ENCODE measurements at regions of chr15 and their contacts with region 1.

Region 1: GRCh38 chr15:62711691-62712454 is 330.7 kb upstream of the TPM1 start:
- DNase-seq: peak; percentile 57
- H3K4me3 Mint-ChIP-seq: no peak overlapping the region
- H3K27ac Mint-ChIP-seq: peak overlapping the region; percentile 59
- H3K4me1 Mint-ChIP-seq: peaks cover 14% of the 10 kb centered on the region
- H3K27me3 Mint-ChIP-seq: no peaks in the 10 kb centered on the region

Region 2: DNA sequence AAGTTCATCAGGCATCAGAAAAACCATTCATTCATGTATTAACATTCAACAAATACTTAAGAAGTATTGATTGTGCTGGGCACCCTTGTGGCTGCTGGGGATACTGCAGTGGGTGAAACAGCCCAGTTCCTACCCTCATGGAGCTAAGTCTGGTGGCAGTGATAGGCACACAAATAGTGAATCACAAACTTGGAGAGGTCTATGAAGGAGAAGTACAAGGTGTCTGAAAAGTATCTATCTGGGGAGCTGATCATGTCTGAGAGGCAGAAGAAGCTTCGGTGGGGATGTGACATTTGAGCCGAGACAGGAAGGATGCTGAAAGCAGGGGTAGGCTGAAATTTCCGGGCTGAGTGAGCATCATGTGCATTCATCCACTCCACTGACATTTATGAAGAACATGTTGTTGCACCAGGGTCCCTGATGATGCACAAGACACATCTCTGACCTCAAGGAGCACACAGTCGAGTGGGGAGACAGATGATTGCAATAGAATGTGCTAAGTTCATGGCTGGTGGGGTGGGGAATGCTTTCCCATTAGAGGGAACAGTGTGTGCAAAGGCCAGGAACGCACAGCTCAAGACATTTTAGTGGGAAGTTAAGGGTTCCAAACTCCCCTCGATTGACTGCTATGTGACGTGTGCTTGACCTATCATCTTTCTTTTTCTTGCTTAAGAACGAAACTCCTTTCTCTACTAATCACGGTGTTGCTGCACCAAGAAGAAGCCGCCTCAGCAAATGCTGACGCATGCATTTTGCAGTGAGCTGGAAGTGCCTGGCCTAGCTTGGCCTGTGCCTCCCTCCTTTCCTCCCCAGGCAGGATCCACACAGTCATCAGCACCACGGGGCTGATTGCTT is 1923.8 kb before region 1 on chr15:
- CTCF ChIA-PET with region 1: no interaction called
- intact Hi-C with region 1: no loop called
- DNase-seq: peak; percentile 70
- H3K4me3 Mint-ChIP-seq: peak overlapping the region; percentile 17
- H3K27ac Mint-ChIP-seq: peak overlapping the region; percentile 72
- H3K4me1 Mint-ChIP-seq: peaks cover 71% of the 10 kb centered on the region
- H3K27me3 Mint-ChIP-seq: no peaks in the 10 kb centered on the region

Region 3: GRCh38 chr15:62389885-62390790 is 321.7 kb before region 1 on chr15:
- CTCF ChIA-PET with region 1: no interaction called
- intact Hi-C with region 1: loop called (anchors 5 kb)
- DNase-seq: peak; percentile 63
- H3K4me3 Mint-ChIP-seq: peak within 1 kb of the TSS; percentile 85
- H3K27ac Mint-ChIP-seq: peak within 1 kb of the TSS; percentile 46
- H3K4me1 Mint-ChIP-seq: peaks cover 12% of the 10 kb centered on the region
- H3K27me3 Mint-ChIP-seq: peaks cover 19% of the 10 kb centered on the region